ENCODE measurements at regions of chr1 and their contacts with region 1.

Region 1: GRCh38 chr1:198919667-198920398 is 281.0 kb downstream of the PTPRC start:
- DNase-seq: peak; percentile 56
- H3K4me3 ChIP-seq: no peak overlapping the region
- H3K27ac ChIP-seq: peak overlapping the region; percentile 43
- H3K4me1 ChIP-seq: peaks cover 43% of the 10 kb centered on the region
- H3K27me3 ChIP-seq: no peaks in the 10 kb centered on the region
- CTCF ChIP-seq: no peak

Region 2: GRCh38 chr1:198107041-198107440 is 812.8 kb before region 1 on chr1:
- CTCF ChIA-PET with region 1: no interaction called
- dilution Hi-C with region 1: no loop called
- in situ Hi-C with region 1: no loop called
- intact Hi-C with region 1: loop called (anchors 5 kb)
- DNase-seq: peak; percentile 93
- H3K4me3 ChIP-seq: no peak overlapping the region
- H3K27ac ChIP-seq: no peak overlapping the region
- H3K4me1 ChIP-seq: peaks cover 3% of the 10 kb centered on the region
- H3K27me3 ChIP-seq: no peaks in the 10 kb centered on the region
- CTCF ChIP-seq: no peak

Region 3: DNA sequence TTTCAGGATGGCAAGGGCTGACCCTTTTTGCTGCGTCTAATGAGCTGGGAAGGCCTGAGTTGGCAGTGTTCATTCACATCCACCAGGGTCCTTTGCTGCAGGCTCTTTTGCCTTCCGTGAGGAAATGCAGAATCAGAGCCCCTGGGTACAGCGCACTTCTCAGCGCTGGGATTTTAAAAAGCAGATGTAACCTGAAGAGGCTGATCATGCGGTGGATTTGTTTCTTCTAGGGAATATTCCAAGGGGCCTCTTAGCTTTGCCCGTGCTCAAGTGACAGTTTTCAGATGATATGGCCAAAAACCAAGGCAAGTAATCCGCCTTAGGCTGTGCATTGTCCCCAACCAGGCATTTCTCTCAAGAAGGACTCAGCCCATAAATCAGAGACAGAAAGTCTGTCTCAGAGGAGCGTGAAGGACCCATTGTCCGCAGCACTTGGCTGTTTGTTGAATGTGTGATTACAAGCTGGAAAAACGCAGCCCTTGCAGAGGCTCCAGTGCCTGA is 43.4 kb before region 1 on chr1:
- CTCF ChIA-PET with region 1: no interaction called
- dilution Hi-C with region 1: no loop called
- in situ Hi-C with region 1: no loop called
- intact Hi-C with region 1: no loop called
- DNase-seq: no peak
- H3K4me3 ChIP-seq: no peak overlapping the region
- H3K27ac ChIP-seq: no peak overlapping the region
- H3K4me1 ChIP-seq: peaks cover 8% of the 10 kb centered on the region
- H3K27me3 ChIP-seq: no peaks in the 10 kb centered on the region
- CTCF ChIP-seq: no peak

Measured in mammary epithelial cell (primary cell).